Dendritic cell treated with granulocyte-macrophage colony-stimulating factor and Interleukin-4, amounts not matched to agents 40 ng/mL and 50 ng/mL, for 4 days (primary cell): ENCODE measurements at regions of chr17 and their contacts with region 1.

Region 1: DNA sequence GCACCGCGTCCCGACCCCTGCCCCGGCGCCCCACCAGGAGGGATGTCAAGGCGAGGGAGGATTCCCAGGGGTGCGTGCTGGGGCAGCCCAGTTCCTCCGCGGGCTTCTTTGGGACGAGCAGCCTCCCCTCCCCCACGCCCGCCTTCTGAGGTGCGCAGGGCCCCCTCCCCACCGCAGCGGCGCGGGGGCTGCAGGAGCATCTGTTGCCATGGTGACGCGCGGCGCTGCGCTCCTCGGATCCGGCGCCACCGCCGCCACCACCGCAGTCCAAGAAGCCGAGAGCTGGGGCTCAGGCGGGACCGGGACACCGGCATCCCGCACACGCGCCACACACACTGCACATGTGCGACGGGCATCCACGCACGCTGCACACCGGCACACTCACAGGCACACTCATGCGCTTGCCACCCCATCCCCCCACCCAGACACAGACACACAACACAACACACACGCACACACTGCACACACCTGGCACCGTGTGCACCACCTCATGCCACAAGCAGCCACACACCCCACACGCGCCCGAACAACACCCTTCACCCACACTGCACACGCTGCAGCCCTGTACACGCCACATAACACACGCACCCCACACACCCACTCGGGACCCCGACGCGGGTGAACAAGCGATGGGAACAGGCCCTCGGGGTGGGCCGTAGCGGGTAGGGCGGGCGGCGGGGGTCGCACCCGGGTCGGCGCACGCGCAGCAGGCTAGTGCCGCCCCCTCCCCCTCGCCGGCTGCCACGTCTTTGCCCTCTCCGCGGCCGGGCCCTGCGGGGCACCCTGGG is 17.0 kb downstream of the ENPP7 start:
- H3K4me3 Mint-ChIP-seq: no peak overlapping the region
- H3K27ac Mint-ChIP-seq: no peak overlapping the region
- H3K4me1 Mint-ChIP-seq: peaks cover 6% of the 10 kb centered on the region
- H3K27me3 Mint-ChIP-seq: peaks cover 83% of the 10 kb centered on the region

Region 2: DNA sequence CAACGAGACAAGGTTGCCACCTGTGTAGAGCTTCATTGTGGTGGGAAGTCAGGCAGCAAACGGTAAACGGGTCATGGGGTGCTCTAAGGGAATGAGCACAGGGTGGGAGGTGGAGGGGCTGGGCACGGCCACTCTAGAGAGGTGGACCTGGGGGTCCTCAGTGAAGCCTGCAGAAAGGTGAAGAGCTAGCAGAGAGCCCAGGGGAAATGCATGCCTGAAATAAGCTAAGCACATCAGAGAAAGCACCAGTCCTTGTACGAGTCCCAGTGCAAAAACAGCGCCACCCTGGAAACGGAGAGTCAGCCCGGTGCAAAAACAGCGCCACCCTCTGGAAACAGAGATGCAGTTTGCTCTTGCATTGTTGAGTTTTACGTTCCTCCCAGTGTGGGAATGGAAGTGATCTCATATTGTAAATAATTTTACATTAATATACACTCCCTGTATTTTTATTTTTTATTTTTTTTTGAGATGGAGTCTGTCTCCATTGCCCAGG is 222.9 kb after region 1 on chr17:
- intact Hi-C with region 1: loop called (anchors 2 kb)
- H3K4me3 Mint-ChIP-seq: no peak overlapping the region
- H3K27ac Mint-ChIP-seq: no peak overlapping the region
- H3K4me1 Mint-ChIP-seq: no peaks in the 10 kb centered on the region
- H3K27me3 Mint-ChIP-seq: peaks cover 11% of the 10 kb centered on the region

Region 3: DNA sequence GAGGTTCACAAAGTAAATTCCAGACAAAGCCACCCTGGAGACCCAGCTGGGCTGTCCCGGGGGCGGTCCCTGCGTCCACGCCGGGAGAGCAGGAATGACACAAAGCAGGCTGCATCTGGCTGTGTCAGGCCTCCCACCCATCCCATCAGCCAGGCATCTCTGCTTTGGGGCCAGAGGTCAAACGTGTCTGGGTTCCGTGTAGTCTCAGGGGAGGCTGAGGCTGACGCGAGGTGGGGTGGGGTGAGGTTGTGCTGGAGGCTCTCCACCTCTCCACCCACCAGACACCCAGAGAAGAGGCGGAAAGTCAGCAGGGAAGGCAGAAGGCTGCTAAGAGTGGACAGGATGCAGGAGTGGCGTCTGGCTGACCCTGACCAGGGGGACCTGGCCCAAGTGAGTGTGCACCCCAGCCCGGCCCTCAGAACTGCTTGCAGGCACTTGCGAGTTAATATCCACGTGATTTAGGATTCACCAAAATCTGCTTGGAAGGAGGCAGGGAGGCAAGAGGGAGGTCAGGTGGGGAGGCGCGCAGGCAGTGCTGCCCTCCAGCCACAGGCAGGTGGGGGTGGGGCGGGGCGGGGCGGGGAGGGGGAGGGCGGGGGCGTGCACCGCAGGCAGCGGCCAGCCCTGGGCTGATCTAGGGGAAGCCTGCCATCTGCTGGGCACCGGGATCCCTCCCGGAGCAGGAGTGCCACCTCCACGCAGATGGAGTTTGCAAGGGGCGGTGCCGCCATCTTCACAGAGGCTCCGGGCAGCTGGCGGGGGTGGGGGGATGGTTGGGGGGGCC is 243.6 kb after region 1 on chr17:
- intact Hi-C with region 1: loop called (anchors 2 kb)
- H3K4me3 Mint-ChIP-seq: no peak overlapping the region
- H3K27ac Mint-ChIP-seq: no peak overlapping the region
- H3K4me1 Mint-ChIP-seq: peaks cover 25% of the 10 kb centered on the region
- H3K27me3 Mint-ChIP-seq: peaks cover 36% of the 10 kb centered on the region